ENCODE measurements at regions of chr13 and their contacts with region 1.

Region 1: DNA sequence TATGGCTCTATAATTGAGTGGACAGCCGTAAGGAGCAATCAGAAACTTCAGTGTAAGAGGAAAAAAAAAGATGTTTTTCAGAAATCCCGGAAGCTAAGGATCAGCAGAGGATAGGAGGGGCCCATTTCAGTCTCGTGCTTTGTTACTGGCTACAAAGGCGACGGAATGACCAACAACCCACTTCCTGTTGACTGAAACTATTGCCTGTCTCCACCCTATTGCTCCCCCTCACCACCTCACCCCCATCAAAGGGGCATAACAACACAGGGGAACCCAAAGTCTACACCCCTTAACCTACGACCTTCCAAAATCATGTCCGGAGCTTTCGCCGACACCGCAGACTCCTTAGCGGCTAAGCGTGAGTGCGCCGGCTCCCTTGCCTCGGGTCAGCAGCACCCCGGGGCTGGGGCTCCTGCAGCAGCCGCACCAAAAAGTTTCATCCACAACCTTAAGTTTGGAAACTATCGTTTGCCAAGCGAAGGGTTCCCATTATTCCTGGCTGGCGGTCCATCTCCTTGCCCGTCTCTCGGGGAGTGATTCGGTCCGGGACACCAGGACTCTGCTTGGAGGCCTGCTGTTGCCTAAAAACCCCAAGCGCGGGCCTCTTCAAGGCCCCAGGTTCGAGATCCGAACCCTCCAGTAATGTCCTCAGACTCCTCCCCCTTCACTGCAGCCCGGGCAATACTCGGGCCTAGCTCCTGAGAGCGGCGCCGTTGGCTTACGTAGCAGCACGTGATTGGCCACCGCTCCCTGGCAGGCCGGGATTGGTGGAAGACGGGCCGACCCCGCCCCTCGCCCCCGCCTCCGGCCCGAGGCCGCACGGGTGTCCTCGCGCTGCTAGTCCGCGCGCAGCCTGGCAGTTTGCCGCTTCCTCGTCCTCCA is at the start of gene TPP2:
- DNase-seq: peak; percentile 98 to 99 (median 98)
- H3K4me3 ChIP-seq: peak within 1 kb of the TSS; percentile 67 to 99 (median 87)
- H3K4me3 Mint-ChIP-seq: peak within 1 kb of the TSS; percentile 94 to 98
- H3K27ac ChIP-seq: peak within 1 kb of the TSS; percentile 96 to 100
- H3K27ac Mint-ChIP-seq: peak within 1 kb of the TSS; percentile 98 to 100 (median 100)
- H3K4me1 ChIP-seq: peaks cover 48 to 61% of the 10 kb centered on the region in 2 donors
- H3K4me1 Mint-ChIP-seq: peaks cover 62% of the 10 kb centered on the region
- H3K27me3 ChIP-seq: no peaks in the 10 kb centered on the region
- H3K27me3 Mint-ChIP-seq: peaks cover 0 to under 1% (median 0%) of the 10 kb centered on the region in 3 donors
- CTCF ChIP-seq: no peak
- polyA plus RNA-seq, gene TPP2: 18.0 to 39.7 (median 26.0) TPM

Region 2: DNA sequence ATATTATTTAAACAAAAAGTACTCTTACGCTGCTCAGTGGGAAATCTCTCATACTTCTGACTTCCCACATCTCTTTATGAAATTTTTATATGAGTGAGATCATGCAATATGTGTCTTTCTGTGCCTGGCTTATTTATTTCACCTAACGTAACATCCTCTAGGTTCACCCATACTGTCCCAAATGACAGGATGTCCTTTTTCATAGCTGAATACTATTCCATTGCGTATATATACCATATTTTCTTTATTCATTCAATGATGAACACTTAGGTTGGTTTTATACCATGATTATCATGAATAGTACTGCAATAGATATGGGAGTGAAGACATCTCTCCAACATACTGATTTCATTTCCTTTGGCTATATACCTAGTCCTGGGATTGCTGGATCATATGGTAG is 57.5 kb before region 1 on chr13:
- intact Hi-C with region 1: no loop called
- DNase-seq: no peak
- H3K4me3 ChIP-seq: no peak overlapping the region
- H3K4me3 Mint-ChIP-seq: no peak overlapping the region
- H3K27ac ChIP-seq: no peak overlapping the region
- H3K27ac Mint-ChIP-seq: no peak overlapping the region
- H3K4me1 ChIP-seq: no peaks in the 10 kb centered on the region
- H3K4me1 Mint-ChIP-seq: no peaks in the 10 kb centered on the region
- H3K27me3 ChIP-seq: no peaks in the 10 kb centered on the region
- H3K27me3 Mint-ChIP-seq: peaks cover 1 to 4% (median 3%) of the 10 kb centered on the region in 3 donors
- CTCF ChIP-seq: no peak

Region 3: GRCh38 chr13:102609696-102610095 is 13.3 kb after region 1 on chr13:
- intact Hi-C with region 1: loop called in 1 of 2 experiments (anchors 2 kb)
- DNase-seq: no peak
- H3K4me3 ChIP-seq: no peak overlapping the region
- H3K4me3 Mint-ChIP-seq: no peak overlapping the region
- H3K27ac ChIP-seq: peak overlapping the region in 1 of 2 donors; percentile 27
- H3K27ac Mint-ChIP-seq: peak overlapping the region in 2 of 7 donors; percentile 31 to 55
- H3K4me1 ChIP-seq: peaks cover 19 to 28% of the 10 kb centered on the region in 2 donors
- H3K4me1 Mint-ChIP-seq: peaks cover 32% of the 10 kb centered on the region
- H3K27me3 ChIP-seq: no peaks in the 10 kb centered on the region
- H3K27me3 Mint-ChIP-seq: peaks cover 0 to 2% (median 0%) of the 10 kb centered on the region in 3 donors
- CTCF ChIP-seq: no peak

Region 4: DNA sequence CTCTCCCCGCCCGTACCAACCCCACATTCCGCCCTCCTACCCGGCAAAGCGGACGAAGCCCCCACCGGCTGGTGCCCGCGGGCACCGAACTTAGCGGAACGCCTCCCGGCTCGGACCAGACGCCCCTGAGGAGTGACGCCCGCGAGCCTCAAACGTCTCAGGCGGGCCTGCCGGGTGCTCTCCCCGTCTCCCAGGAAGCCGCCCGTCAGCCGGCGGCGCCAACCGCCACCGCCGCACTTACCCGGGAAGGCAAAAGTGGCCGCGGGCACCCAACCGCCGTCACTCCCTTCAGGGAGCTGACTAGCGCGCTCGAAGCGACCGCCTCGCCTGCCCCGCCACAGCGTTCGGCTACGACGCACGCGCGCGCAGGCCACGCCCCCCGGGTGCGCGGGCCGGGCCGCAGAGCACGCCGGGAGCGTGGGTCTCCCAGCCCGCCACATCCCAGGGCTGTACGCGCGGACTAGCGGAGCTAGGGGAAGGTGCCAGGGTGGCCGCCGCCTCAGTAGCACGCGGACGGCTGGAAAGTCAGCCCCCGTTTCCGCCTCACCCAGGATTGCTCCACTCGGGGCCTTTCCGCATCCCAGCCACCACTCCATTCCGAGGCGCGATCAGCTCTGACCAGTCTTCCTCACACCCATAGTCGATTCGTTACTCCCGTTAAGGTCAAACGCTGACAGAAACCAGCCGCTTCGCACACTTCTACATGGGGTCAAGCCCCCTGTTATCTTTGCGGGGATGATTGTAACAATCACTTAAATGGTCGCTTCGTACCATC is 177.2 kb after region 1 on chr13 and contains the start of gene TEX30:
- intact Hi-C with region 1: loop called in 1 of 2 experiments (anchors 10 kb)
- DNase-seq: peak; percentile 78 to 83 (median 82)
- H3K4me3 ChIP-seq: peak within 1 kb of the TSS; percentile 61 to 81 (median 78)
- H3K4me3 Mint-ChIP-seq: peak within 1 kb of the TSS; percentile 97
- H3K27ac ChIP-seq: peak within 1 kb of the TSS; percentile 27 to 69
- H3K27ac Mint-ChIP-seq: peak within 1 kb of the TSS; percentile 57 to 93 (median 89)
- H3K4me1 ChIP-seq: peaks cover 25 to 29% of the 10 kb centered on the region in 2 donors
- H3K4me1 Mint-ChIP-seq: peaks cover 34% of the 10 kb centered on the region
- H3K27me3 ChIP-seq: no peaks in the 10 kb centered on the region
- H3K27me3 Mint-ChIP-seq: peaks cover 0 to 5% (median 5%) of the 10 kb centered on the region in 3 donors
- CTCF ChIP-seq: no peak
- polyA plus RNA-seq, gene TEX30: 2.7 to 11.3 (median 10.9) TPM

Region 5: DNA sequence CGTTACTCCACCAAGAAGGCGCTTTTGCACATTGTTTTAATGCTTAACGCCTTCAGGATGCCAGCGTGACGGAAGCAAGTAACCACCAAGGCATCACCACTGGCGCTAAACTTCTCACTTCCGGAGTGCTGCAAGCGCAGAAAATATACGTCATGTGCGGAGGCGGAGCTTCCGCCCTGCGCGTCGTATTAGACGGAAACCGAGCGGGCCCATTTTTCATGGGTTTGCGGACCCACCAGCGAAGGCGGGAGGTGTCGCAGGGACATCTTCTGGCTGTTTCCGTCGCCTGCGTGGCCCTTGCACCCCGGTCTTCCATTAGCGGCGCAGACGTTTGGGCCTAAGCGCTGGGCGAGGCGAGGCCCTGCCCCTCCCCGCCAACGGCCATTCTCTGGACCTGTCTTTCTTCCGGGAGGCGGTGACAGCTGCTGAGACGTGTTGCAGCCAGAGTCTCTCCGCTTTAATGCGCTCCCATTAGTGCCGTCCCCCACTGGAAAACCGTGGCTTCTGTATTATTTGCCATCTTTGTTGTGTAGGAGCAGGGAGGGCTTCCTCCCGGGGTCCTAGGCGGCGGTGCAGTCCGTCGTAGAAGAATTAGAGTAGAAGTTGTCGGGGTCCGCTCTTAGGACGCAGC is 249.4 kb after region 1 on chr13 and contains the start of gene ERCC5:
- intact Hi-C with region 1: loop called (anchors 2 to 5 kb)
- DNase-seq: peak; percentile 94 to 97 (median 95)
- H3K4me3 ChIP-seq: peak within 1 kb of the TSS; percentile 72 to 97 (median 91)
- H3K4me3 Mint-ChIP-seq: peak within 1 kb of the TSS; percentile 92 to 93
- H3K27ac ChIP-seq: peak within 1 kb of the TSS; percentile 97 to 98
- H3K27ac Mint-ChIP-seq: peak within 1 kb of the TSS; percentile 96 to 99 (median 98)
- H3K4me1 ChIP-seq: peaks cover 15 to 22% of the 10 kb centered on the region in 2 donors
- H3K4me1 Mint-ChIP-seq: peaks cover 21% of the 10 kb centered on the region
- H3K27me3 ChIP-seq: no peaks in the 10 kb centered on the region
- H3K27me3 Mint-ChIP-seq: peaks cover 0 to 3% (median 0%) of the 10 kb centered on the region in 3 donors
- CTCF ChIP-seq: no peak
- polyA plus RNA-seq, gene ERCC5: 15.2 to 34.2 (median 22.1) TPM

Region 6: GRCh38 chr13:103315711-103316110 is 719.3 kb after region 1 on chr13:
- intact Hi-C with region 1: no loop called
- DNase-seq: no peak
- H3K4me3 ChIP-seq: no peak overlapping the region
- H3K4me3 Mint-ChIP-seq: no peak overlapping the region
- H3K27ac ChIP-seq: no peak overlapping the region
- H3K27ac Mint-ChIP-seq: no peak overlapping the region
- H3K4me1 ChIP-seq: no peaks in the 10 kb centered on the region
- H3K4me1 Mint-ChIP-seq: no peaks in the 10 kb centered on the region
- H3K27me3 ChIP-seq: no peaks in the 10 kb centered on the region
- H3K27me3 Mint-ChIP-seq: no peaks in the 10 kb centered on the region
- CTCF ChIP-seq: no peak

Measured in CD14-positive monocyte (primary cell).